Calu3 (cell line): ENCODE measurements at regions of chr20 and their contacts with region 1.

Region 1: DNA sequence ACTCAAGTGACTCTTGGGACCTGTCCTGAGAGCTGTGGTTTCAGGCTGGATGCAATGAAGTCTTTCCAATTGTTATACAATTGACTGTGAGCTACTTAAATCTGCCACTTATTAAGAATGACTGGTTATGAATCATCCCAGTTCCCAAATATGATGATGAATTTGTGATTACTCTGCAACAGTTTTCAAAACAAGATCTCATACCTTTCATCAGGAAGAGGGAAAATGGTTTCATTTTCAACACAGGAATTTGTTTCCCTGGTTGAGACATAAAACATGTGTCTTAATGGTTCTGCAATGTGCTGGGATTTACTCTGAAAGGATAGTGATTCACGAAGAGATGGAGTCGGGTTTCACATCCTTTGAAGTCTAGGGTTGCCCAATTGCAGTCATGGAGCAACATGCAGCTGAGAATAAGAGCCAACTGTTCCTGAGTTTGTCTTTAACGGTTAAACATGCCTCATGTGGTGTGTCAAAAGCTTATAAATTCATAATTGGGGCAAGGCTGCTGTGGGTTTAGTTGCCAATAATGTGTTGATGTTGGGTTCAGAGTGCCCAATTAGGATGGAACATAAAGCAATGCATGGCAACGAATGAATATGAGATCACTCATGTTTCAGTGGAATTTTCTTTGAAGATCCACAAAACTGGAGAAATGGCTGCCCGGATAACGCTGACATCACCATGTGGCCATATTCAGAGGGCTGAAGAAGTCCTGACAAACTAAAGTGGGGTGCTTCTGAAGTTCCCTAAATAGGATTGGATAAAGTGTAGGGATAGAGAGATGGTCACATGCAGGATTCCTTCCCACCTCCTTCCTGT is 41.0 kb downstream of the CYP24A1 start:
- DNase-seq: peak; percentile 77
- H3K4me3 Mint-ChIP-seq: no peak overlapping the region
- H3K27ac Mint-ChIP-seq: no peak overlapping the region
- H3K4me1 Mint-ChIP-seq: peaks cover 10% of the 10 kb centered on the region
- H3K27me3 Mint-ChIP-seq: no peaks in the 10 kb centered on the region
- CTCF ChIP-seq: no peak

Region 2: GRCh38 chr20:54078296-54078984 is 54.4 kb before region 1 on chr20:
- CTCF ChIA-PET with region 1: no interaction called
- intact Hi-C with region 1: no loop called
- DNase-seq: no peak
- H3K4me3 Mint-ChIP-seq: no peak overlapping the region
- H3K27ac Mint-ChIP-seq: no peak overlapping the region
- H3K4me1 Mint-ChIP-seq: no peaks in the 10 kb centered on the region
- H3K27me3 Mint-ChIP-seq: no peaks in the 10 kb centered on the region
- CTCF ChIP-seq: no peak

Region 3: DNA sequence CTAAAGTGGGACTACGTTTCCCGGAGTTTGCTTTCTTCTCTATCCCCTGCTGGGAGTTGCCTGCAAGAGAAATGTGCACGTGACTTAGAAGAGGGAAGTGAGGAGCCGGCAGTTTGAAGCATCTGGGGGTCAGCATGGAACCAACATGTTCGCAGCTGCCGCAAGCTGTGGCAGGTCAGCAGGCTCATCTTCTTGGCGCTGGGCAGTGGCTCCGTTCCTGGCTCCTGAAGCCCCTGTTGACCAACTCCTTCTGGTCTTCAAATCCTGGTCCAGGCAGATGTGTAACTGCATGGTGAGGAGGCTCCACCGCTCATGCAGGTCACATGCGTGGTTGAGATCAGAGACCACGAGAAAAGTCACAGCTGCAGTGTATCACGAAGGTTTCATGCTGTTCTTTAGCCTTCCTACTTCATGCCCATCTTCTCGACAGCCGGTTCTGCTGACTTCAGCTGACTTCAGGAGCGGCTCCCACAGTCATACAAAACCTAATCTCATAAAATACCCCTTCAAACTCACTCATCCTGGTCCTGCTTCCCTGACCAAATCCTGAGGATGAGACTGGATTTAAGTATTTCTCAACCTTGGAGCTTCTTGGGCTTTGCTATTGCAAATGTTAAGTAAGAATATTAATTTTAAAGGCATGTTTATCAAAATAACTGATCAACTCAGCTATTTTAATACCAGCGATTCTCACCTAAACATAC is 17.5 kb before region 1 on chr20:
- CTCF ChIA-PET with region 1: interaction called, 17 read pairs
- intact Hi-C with region 1: loop called (anchors 2 kb)
- DNase-seq: no peak
- H3K4me3 Mint-ChIP-seq: peak overlapping the region; percentile 1
- H3K27ac Mint-ChIP-seq: peak overlapping the region; percentile 96
- H3K4me1 Mint-ChIP-seq: peaks cover 91% of the 10 kb centered on the region
- H3K27me3 Mint-ChIP-seq: no peaks in the 10 kb centered on the region
- CTCF ChIP-seq: no peak

Region 4: GRCh38 chr20:54148947-54149503 is 16.2 kb after region 1 on chr20:
- CTCF ChIA-PET with region 1: interaction called, 20 read pairs
- intact Hi-C with region 1: loop called (anchors 1 kb)
- DNase-seq: peak; percentile 72
- H3K4me3 Mint-ChIP-seq: no peak overlapping the region
- H3K27ac Mint-ChIP-seq: peak overlapping the region; percentile 64
- H3K4me1 Mint-ChIP-seq: peaks cover 51% of the 10 kb centered on the region
- H3K27me3 Mint-ChIP-seq: no peaks in the 10 kb centered on the region
- CTCF ChIP-seq: no peak

Region 5: GRCh38 chr20:54167909-54168872 is 35.4 kb after region 1 on chr20:
- CTCF ChIA-PET with region 1: interaction called, 5 read pairs
- intact Hi-C with region 1: loop called (anchors 2 kb)
- DNase-seq: peak; percentile 85
- H3K4me3 Mint-ChIP-seq: peak overlapping the region; percentile 43
- H3K27ac Mint-ChIP-seq: peak overlapping the region; percentile 83
- H3K4me1 Mint-ChIP-seq: peaks cover 63% of the 10 kb centered on the region
- H3K27me3 Mint-ChIP-seq: no peaks in the 10 kb centered on the region
- CTCF ChIP-seq: no peak

Region 6: DNA sequence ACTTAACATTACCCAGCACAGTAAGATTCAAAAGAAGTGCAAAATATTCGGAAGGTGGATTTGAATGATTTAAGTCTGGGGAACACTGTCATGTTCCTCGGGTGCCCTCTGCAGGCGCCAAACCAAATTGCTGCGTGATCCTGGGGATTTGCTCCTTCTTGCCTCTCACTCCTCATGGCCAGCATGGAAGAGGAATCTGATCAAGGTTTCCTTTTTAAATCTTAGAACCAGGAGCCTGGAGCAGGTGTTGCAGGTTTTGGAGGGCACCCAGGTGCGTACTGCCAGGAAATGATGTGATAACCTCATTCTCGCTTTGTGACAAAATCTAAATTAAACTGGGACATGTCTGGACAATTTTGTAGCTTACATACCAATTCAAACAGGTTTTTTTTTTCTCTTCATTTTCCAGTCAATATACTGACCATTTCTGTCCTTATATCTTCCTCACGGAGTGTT is 66.9 kb after region 1 on chr20:
- CTCF ChIA-PET with region 1: interaction called, 5 read pairs
- intact Hi-C with region 1: loop called (anchors 2 kb)
- DNase-seq: peak; percentile 92
- H3K4me3 Mint-ChIP-seq: no peak overlapping the region
- H3K27ac Mint-ChIP-seq: no peak overlapping the region
- H3K4me1 Mint-ChIP-seq: peaks cover 67% of the 10 kb centered on the region
- H3K27me3 Mint-ChIP-seq: no peaks in the 10 kb centered on the region
- CTCF ChIP-seq: peak; percentile 93

Region 7: GRCh38 chr20:54227241-54227640 is 94.4 kb after region 1 on chr20:
- CTCF ChIA-PET with region 1: no interaction called
- intact Hi-C with region 1: no loop called
- DNase-seq: no peak
- H3K4me3 Mint-ChIP-seq: no peak overlapping the region
- H3K27ac Mint-ChIP-seq: no peak overlapping the region
- H3K4me1 Mint-ChIP-seq: no peaks in the 10 kb centered on the region
- H3K27me3 Mint-ChIP-seq: no peaks in the 10 kb centered on the region
- CTCF ChIP-seq: no peak

Region 8: GRCh38 chr20:54362296-54362695 is 229.5 kb after region 1 on chr20:
- CTCF ChIA-PET with region 1: no interaction called
- intact Hi-C with region 1: no loop called
- DNase-seq: no peak
- H3K4me3 Mint-ChIP-seq: no peak overlapping the region
- H3K27ac Mint-ChIP-seq: no peak overlapping the region
- H3K4me1 Mint-ChIP-seq: no peaks in the 10 kb centered on the region
- H3K27me3 Mint-ChIP-seq: no peaks in the 10 kb centered on the region
- CTCF ChIP-seq: no peak

Region 9: GRCh38 chr20:54407459-54407858 is 274.6 kb after region 1 on chr20:
- CTCF ChIA-PET with region 1: no interaction called
- intact Hi-C with region 1: no loop called
- DNase-seq: no peak
- H3K4me3 Mint-ChIP-seq: no peak overlapping the region
- H3K27ac Mint-ChIP-seq: no peak overlapping the region
- H3K4me1 Mint-ChIP-seq: no peaks in the 10 kb centered on the region
- H3K27me3 Mint-ChIP-seq: no peaks in the 10 kb centered on the region
- CTCF ChIP-seq: no peak